ENCODE measurements at regions of chr2 and their contacts with region 1.

Region 1: DNA sequence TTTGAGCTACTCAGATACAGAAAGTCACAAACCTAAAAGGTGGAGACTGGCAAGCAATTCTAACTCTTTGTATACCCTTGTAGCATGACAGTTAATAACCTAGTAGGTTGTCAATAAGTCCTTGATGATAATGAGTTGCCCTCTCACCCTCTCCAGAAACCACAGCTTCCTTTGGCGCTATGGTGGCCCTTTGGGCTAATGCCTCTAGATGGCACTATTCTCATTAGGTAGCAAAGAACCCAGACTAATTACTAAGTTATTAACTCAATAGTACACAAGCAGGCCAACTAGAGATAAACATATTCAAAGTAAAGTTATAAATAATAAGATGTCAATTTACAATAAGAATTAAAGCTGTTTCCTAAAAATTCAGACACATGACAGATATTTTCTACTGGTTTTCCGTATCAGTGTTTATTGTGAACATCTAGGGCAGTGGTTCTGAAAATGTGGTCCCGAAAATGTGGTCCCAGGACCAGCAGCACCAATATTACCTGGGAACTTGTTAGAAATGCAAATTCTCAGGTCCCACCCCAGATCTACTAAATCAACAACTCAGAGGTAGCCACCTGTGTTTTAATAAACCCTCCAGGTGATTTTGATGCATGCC is 41.1 kb downstream of the LDAH start:
- DNase-seq: peak; percentile 38
- H3K4me3 ChIP-seq: no peak overlapping the region
- H3K27ac ChIP-seq: no peak overlapping the region
- H3K4me1 ChIP-seq: no peaks in the 10 kb centered on the region
- H3K27me3 ChIP-seq: no peaks in the 10 kb centered on the region
- CTCF ChIP-seq: peak; percentile 54 to 68
- POLR2A ChIP-seq: no peak

Region 2: GRCh38 chr2:20755132-20755800 is 26.5 kb before region 1 on chr2:
- CTCF ChIA-PET with region 1: interaction called, 26 read pairs
- POLR2A ChIA-PET with region 1: no interaction called
- dilution Hi-C with region 1: no loop called
- intact Hi-C with region 1: no loop called
- DNase-seq: peak; percentile 52
- H3K4me3 ChIP-seq: no peak overlapping the region
- H3K27ac ChIP-seq: no peak overlapping the region
- H3K4me1 ChIP-seq: no peaks in the 10 kb centered on the region
- H3K27me3 ChIP-seq: no peaks in the 10 kb centered on the region
- CTCF ChIP-seq: peak in 1 of 2 donors; percentile 38
- POLR2A ChIP-seq: no peak

Region 3: DNA sequence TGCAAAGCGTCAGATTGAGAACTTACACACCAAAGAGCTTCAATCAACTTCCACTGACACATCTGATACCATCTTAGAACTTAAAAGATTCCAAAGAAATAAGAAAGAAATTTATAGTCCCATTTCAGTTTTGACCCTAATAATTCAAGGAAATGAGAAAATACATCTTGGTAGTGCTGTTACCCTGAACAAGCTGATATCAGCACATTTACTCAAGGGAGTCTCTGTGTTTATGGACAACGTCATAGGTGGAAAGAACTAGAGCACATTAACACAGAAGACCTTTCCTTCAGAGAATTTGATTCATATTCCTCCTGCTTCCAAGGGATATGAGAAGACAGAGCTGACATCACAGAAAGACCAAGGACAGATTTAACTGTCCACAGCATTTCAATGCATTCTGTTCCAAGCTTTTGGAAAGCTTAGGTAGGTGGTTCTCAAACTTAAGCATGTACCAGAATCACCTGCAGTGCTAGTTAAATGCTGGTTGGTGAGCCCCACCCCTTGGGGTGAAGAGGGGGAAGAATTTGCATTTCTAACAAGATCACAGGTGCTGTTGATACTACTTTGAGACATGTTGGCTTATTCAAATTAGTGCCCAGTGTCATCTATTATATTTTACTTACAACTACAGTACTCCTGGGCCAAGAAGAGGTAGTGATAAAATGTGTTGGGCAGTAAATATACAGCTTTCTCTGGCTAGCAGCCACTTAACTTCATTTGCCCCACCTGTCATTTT is 18.6 kb before region 1 on chr2:
- CTCF ChIA-PET with region 1: interaction called, 26 read pairs
- POLR2A ChIA-PET with region 1: no interaction called
- dilution Hi-C with region 1: no loop called
- intact Hi-C with region 1: no loop called
- DNase-seq: no peak
- H3K4me3 ChIP-seq: no peak overlapping the region
- H3K27ac ChIP-seq: no peak overlapping the region
- H3K4me1 ChIP-seq: no peaks in the 10 kb centered on the region
- H3K27me3 ChIP-seq: no peaks in the 10 kb centered on the region
- CTCF ChIP-seq: no peak
- POLR2A ChIP-seq: no peak

Region 4: DNA sequence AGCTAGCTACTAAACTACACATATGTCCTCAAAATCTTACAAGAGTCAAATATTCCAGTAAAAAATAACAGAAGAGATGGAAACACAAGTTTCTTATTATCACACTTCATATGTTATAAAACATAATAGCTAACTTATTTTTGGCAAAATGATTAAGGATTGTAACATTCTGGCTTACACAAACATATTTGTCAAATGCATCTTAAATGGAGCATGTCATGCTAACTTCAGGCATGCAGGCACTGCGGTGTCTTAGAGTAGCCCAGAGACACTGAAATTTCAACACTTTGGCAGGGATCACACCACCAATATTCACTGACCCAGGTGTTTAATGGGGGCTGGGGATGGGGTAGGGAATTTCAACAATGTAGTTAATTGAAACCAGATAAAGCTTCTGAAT is 10.5 kb before region 1 on chr2:
- CTCF ChIA-PET with region 1: interaction called, 20 read pairs
- POLR2A ChIA-PET with region 1: no interaction called
- dilution Hi-C with region 1: no loop called
- intact Hi-C with region 1: no loop called
- DNase-seq: no peak
- H3K4me3 ChIP-seq: no peak overlapping the region
- H3K27ac ChIP-seq: no peak overlapping the region
- H3K4me1 ChIP-seq: no peaks in the 10 kb centered on the region
- H3K27me3 ChIP-seq: no peaks in the 10 kb centered on the region
- CTCF ChIP-seq: no peak
- POLR2A ChIP-seq: no peak

Region 5: DNA sequence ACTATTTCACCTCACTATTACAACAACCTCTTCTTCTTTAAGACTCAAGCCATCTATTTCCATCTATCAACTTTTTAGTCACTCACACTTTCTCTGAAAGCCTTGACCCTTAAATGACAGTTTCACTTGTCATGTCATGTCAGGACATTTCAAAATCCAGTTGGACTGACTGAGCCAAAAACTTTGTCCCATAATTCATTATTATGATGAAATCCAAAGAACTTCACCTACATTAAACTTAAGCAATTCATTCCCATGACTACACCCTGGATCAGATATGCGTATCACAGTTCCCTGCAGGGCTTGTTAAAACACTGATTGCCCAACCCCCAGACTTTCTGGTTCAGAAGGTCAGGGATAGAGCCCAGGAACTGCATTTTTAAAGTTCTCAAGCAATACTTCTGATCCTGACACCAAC is 14.6 kb after region 1 on chr2:
- CTCF ChIA-PET with region 1: interaction called, 22 read pairs
- POLR2A ChIA-PET with region 1: no interaction called
- dilution Hi-C with region 1: no loop called
- intact Hi-C with region 1: no loop called
- DNase-seq: no peak
- H3K4me3 ChIP-seq: no peak overlapping the region
- H3K27ac ChIP-seq: no peak overlapping the region
- H3K4me1 ChIP-seq: no peaks in the 10 kb centered on the region
- H3K27me3 ChIP-seq: no peaks in the 10 kb centered on the region
- CTCF ChIP-seq: no peak
- POLR2A ChIP-seq: no peak

Region 6: GRCh38 chr2:20822535-20823490 is 41.1 kb after region 1 on chr2 and contains the start of gene LDAH:
- CTCF ChIA-PET with region 1: interaction called, 11 read pairs
- POLR2A ChIA-PET with region 1: no interaction called
- dilution Hi-C with region 1: no loop called
- intact Hi-C with region 1: no loop called
- DNase-seq: peak; percentile 87
- H3K4me3 ChIP-seq: peak within 1 kb of the TSS; percentile 51 to 89 (median 66)
- H3K27ac ChIP-seq: peak within 1 kb of the TSS; percentile 72
- H3K4me1 ChIP-seq: no peaks in the 10 kb centered on the region
- H3K27me3 ChIP-seq: peaks cover 0 to 2% of the 10 kb centered on the region in 2 experiments
- CTCF ChIP-seq: no peak
- POLR2A ChIP-seq: peak; percentile 90
- total RNA-seq, gene LDAH: 24.0 and 24.2 TPM in 2 replicates

Region 7: GRCh38 chr2:21118302-21118920 is 336.6 kb after region 1 on chr2:
- CTCF ChIA-PET with region 1: interaction called, 4 read pairs
- POLR2A ChIA-PET with region 1: no interaction called
- dilution Hi-C with region 1: no loop called
- intact Hi-C with region 1: loop called (anchors 10 kb)
- DNase-seq: peak; percentile 59
- H3K4me3 ChIP-seq: no peak overlapping the region
- H3K27ac ChIP-seq: no peak overlapping the region
- H3K4me1 ChIP-seq: no peaks in the 10 kb centered on the region
- H3K27me3 ChIP-seq: no peaks in the 10 kb centered on the region
- CTCF ChIP-seq: peak; percentile 18 to 45
- POLR2A ChIP-seq: no peak

Region 8: GRCh38 chr2:22124003-22124402 is 1342.2 kb after region 1 on chr2:
- CTCF ChIA-PET with region 1: no interaction called
- POLR2A ChIA-PET with region 1: no interaction called
- dilution Hi-C with region 1: no loop called
- intact Hi-C with region 1: no loop called
- DNase-seq: no peak
- H3K4me3 ChIP-seq: no peak overlapping the region
- H3K27ac ChIP-seq: no peak overlapping the region
- H3K4me1 ChIP-seq: no peaks in the 10 kb centered on the region
- H3K27me3 ChIP-seq: no peaks in the 10 kb centered on the region
- CTCF ChIP-seq: no peak
- POLR2A ChIP-seq: no peak

Measured in endothelial cell of umbilical vein (primary cell).